Calu3 (cell line): ENCODE measurements at regions of chr1 and their contacts with region 1.

Region 1: GRCh38 chr1:184212649-184213314 is 161.3 kb downstream of the TSEN15 start:
- DNase-seq: peak; percentile 80
- H3K4me3 Mint-ChIP-seq: no peak overlapping the region
- H3K27ac Mint-ChIP-seq: peak overlapping the region; percentile 88
- H3K4me1 Mint-ChIP-seq: peaks cover 26% of the 10 kb centered on the region
- H3K27me3 Mint-ChIP-seq: no peaks in the 10 kb centered on the region
- CTCF ChIP-seq: no peak

Region 2: DNA sequence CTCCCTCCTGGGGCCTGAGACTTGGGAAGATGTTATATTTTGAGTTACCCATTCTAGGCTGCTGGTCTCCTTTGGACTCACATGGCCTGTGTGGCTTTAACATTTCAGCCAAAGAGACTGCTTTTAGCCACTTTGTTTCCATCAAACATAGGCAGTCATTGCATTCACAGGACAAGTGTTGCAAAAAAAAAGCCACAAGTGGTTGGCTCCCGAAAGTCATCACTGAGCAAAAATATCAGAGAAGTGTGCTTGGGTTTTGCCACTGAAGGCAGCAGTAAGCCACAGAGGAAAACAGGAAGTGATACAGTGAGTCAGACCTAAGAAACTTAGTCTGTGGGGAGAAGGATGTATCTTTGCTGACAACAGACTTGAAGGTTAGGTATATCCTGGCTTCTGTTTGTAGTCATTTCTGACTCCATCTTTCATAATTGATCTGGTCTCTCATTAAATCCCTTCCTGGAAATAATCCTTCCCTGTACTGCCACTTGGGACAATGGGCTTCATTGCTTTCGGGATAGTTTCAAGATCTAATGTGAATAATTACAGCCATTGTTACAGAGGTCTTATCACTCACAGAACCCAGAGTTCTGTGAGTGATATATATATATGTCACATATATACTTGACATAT is 256.1 kb before region 1 on chr1:
- CTCF ChIA-PET with region 1: no interaction called
- intact Hi-C with region 1: loop called (anchors 10 kb)
- DNase-seq: peak; percentile 31
- H3K4me3 Mint-ChIP-seq: no peak overlapping the region
- H3K27ac Mint-ChIP-seq: no peak overlapping the region
- H3K4me1 Mint-ChIP-seq: peaks cover 9% of the 10 kb centered on the region
- H3K27me3 Mint-ChIP-seq: no peaks in the 10 kb centered on the region
- CTCF ChIP-seq: no peak

Region 3: DNA sequence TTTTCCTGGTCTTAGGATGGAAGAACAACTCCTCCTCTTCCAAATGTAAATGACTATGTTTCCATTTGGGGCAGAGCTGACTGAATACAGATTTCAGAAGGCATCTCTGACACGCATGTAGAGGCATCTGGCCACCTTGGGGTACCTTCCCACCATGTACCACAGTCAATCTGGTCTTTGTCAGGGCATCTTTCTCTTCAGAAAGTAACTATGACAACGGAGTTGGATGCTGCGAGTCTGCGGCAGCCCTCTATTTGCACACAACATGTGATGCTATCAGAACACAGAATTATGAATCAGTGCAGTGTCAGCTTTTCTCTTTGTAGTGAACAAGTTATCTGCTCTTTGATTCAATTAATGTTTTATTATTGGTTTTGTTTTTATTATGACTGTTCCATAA is 66.6 kb before region 1 on chr1:
- CTCF ChIA-PET with region 1: no interaction called
- intact Hi-C with region 1: loop called (anchors 5 kb)
- DNase-seq: no peak
- H3K4me3 Mint-ChIP-seq: no peak overlapping the region
- H3K27ac Mint-ChIP-seq: no peak overlapping the region
- H3K4me1 Mint-ChIP-seq: peaks cover 19% of the 10 kb centered on the region
- H3K27me3 Mint-ChIP-seq: peaks cover 10% of the 10 kb centered on the region
- CTCF ChIP-seq: no peak

Region 4: GRCh38 chr1:184228558-184228957 is 15.8 kb after region 1 on chr1:
- CTCF ChIA-PET with region 1: no interaction called
- intact Hi-C with region 1: no loop called
- DNase-seq: no peak
- H3K4me3 Mint-ChIP-seq: no peak overlapping the region
- H3K27ac Mint-ChIP-seq: no peak overlapping the region
- H3K4me1 Mint-ChIP-seq: no peaks in the 10 kb centered on the region
- H3K27me3 Mint-ChIP-seq: peaks cover 48% of the 10 kb centered on the region
- CTCF ChIP-seq: no peak